ENCODE measurements at regions of chr3 and their contacts with region 1.

Region 1: GRCh38 chr3:101381809-101382208 is 61.4 kb upstream of the IMPG2 start:
- DNase-seq: peak; percentile 6
- ATAC-seq: peak; percentile 73
- H3K4me3 ChIP-seq: no peak overlapping the region
- H3K27ac ChIP-seq: no peak overlapping the region
- H3K4me1 ChIP-seq: no peaks in the 10 kb centered on the region
- H3K27me3 ChIP-seq: no peaks in the 10 kb centered on the region
- CTCF ChIP-seq: peak; percentile 15 to 52 (median 46); a peak in 4 of 6 replicates
- POLR2A ChIP-seq: no peak
- RAD21 ChIP-seq: peak; percentile 66

Region 2: GRCh38 chr3:100603469-100603868 is 778.3 kb before region 1 on chr3:
- CTCF ChIA-PET with region 1: no interaction called
- POLR2A ChIA-PET with region 1: no interaction called
- RAD21 ChIA-PET with region 1: no interaction called
- intact Hi-C with region 1: loop called (anchors 10 kb)
- DNase-seq: peak; percentile 41
- ATAC-seq: peak; percentile 94
- H3K4me3 ChIP-seq: no peak overlapping the region
- H3K27ac ChIP-seq: no peak overlapping the region
- H3K4me1 ChIP-seq: peaks cover 3 to 19% of the 10 kb centered on the region in 2 experiments; a peak in 3 of 4 replicates
- H3K27me3 ChIP-seq: no peaks in the 10 kb centered on the region
- CTCF ChIP-seq: peak; percentile 53 to 71 (median 66); a peak in 5 of 6 replicates
- POLR2A ChIP-seq: no peak
- RAD21 ChIP-seq: peak; percentile 65

Region 3: DNA sequence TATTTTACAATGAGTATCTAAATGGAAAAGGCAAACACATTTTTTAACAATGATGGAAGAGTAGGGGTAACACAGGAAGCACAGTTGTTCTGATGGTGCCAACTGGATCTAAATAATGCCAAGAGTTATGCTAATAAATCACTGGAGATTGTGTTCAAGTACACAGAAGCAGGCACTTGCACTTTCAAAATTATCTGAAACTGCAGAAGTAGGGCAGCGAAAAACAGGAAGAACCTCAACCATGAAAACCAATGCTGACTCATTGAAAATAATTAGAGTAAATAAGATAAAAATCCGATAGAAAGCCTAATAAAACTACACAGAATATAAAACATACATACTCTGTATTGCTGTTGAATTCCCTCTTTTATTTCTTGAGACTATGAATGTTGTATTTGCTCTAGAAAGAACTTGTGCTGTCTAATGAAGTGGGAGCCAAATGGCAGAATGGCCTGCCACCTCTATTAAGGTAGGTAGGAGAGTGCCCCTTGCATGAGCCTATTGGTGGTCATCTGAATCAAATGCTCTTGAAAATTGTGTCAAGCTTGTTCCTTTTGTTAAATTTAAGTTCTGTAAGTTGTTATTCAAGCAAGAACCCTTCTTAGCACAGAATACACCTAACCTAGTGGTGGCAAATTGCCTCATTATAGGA is 482.2 kb before region 1 on chr3:
- CTCF ChIA-PET with region 1: no interaction called
- POLR2A ChIA-PET with region 1: no interaction called
- RAD21 ChIA-PET with region 1: no interaction called
- intact Hi-C with region 1: loop called (anchors 10 kb)
- DNase-seq: no peak
- ATAC-seq: no peak
- H3K4me3 ChIP-seq: no peak overlapping the region
- H3K27ac ChIP-seq: no peak overlapping the region
- H3K4me1 ChIP-seq: no peaks in the 10 kb centered on the region
- H3K27me3 ChIP-seq: no peaks in the 10 kb centered on the region
- CTCF ChIP-seq: no peak
- POLR2A ChIP-seq: no peak
- RAD21 ChIP-seq: no peak

Region 4: DNA sequence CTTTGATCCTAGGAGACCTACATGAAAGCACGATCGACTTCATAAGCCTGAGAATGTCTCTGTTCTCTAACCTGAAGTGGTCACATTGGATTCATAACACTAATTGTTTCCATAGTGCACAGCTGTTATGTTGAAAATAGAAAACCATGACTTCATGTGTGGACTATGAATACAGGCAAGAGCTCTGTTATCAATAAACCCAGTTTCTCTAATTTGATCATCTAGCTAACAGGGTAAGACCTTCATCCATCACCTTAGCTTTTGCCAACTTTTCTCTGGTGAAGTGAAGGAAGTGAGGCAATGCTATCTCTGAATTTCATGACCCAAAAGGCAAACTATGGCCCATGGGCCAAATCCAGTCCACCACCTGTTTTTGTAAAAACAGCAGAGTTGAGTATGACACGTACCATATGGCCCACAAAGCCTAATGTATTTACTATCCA is 415.7 kb before region 1 on chr3:
- CTCF ChIA-PET with region 1: no interaction called
- POLR2A ChIA-PET with region 1: no interaction called
- RAD21 ChIA-PET with region 1: no interaction called
- intact Hi-C with region 1: no loop called
- DNase-seq: no peak
- ATAC-seq: no peak
- H3K4me3 ChIP-seq: no peak overlapping the region
- H3K27ac ChIP-seq: no peak overlapping the region
- H3K4me1 ChIP-seq: no peaks in the 10 kb centered on the region
- H3K27me3 ChIP-seq: no peaks in the 10 kb centered on the region
- CTCF ChIP-seq: no peak
- POLR2A ChIP-seq: no peak
- RAD21 ChIP-seq: no peak

Region 5: DNA sequence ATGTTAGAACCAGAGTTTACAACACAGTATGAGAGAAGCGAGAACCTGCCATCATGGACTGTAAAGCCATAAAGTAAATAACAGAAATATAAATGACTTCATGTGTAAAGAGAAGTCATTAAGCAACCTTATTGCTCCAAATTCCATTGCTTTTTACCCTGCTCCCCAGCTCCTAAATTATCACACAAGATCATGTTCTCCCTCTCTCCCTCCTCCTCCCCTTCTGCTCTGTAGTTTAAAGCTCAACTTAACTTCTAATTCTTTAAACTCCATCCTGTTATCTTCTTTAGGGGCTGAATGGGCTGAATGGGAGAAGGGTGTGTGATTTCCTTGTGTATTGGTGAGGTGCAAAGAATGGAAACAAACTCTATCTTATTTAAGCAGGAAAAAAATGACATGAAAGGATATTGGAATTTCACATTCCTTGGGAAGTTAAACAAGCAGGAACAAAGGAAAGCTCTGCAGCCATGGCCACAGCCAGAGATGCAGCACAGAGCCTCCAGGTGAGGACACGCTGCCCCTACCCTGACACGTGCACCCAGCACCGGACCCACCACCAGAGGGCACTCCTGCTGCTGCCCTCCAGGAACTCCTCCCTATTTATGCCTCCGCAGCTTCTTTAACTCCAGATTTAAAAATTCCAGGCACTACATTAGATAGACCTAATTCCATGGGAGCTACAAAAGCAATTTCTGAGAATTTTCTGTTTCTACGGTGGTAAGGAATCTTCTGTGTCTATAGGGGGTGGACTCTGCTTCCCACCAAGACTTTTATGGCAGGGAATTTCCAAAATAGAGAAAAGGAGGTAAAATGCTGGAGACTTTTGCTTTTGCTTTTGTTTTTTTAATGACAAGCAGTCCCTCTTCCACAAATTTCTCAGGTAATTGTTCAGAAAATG is 311.7 kb before region 1 on chr3:
- CTCF ChIA-PET with region 1: interaction called, 4 read pairs
- POLR2A ChIA-PET with region 1: no interaction called
- RAD21 ChIA-PET with region 1: no interaction called
- intact Hi-C with region 1: loop called (anchors 5 kb)
- DNase-seq: peak; percentile 57
- ATAC-seq: peak; percentile 100
- H3K4me3 ChIP-seq: no peak overlapping the region
- H3K27ac ChIP-seq: no peak overlapping the region
- H3K4me1 ChIP-seq: peaks cover 0 to 16% of the 10 kb centered on the region in 2 experiments; a peak in 1 of 4 replicates
- H3K27me3 ChIP-seq: no peaks in the 10 kb centered on the region
- CTCF ChIP-seq: peak; percentile 73 to 95 (median 95); a peak in 5 of 6 replicates
- POLR2A ChIP-seq: no peak
- RAD21 ChIP-seq: peak; percentile 69

Region 6: DNA sequence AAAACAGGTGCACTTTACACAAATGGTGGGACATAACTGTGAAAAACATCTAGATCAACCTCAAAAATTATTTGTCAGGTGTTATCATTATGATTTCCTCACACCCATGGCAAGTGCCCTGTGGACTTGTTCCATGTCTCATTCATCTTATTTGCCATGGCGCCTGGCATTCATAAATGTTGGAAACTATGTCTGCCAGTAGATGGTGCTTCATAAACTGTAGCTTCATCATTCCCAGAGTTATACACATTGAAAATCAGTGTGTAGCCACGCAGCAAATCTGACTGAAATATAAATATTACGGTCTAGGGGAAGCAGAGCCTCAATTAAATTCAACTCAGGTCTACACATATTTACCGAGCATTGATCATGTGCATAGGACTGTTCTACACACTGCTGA is 152.1 kb before region 1 on chr3:
- CTCF ChIA-PET with region 1: no interaction called
- POLR2A ChIA-PET with region 1: no interaction called
- RAD21 ChIA-PET with region 1: no interaction called
- intact Hi-C with region 1: loop called (anchors 10 kb)
- DNase-seq: no peak
- ATAC-seq: no peak; the same call in 1 of the 2 replicates
- H3K4me3 ChIP-seq: no peak overlapping the region
- H3K27ac ChIP-seq: no peak overlapping the region
- H3K4me1 ChIP-seq: no peaks in the 10 kb centered on the region
- H3K27me3 ChIP-seq: no peaks in the 10 kb centered on the region
- CTCF ChIP-seq: peak in 2 of 3 experiments; percentile 12 to 22; a peak in 1 of 6 replicates
- POLR2A ChIP-seq: no peak
- RAD21 ChIP-seq: peak; percentile 33; the same call in 1 of the 2 replicates

Measured in HCT116 (cell line).